ENCODE measurements at regions of chr22 and their contacts with region 1.

Region 1: GRCh38 chr22:35430897-35431322 is 31.0 kb downstream of the MCM5 start:
- DNase-seq: peak; percentile 89 to 95 (median 94)
- H3K4me3 ChIP-seq: no peak overlapping the region
- H3K27ac ChIP-seq: peak overlapping the region in 1 of 2 donors; percentile 33
- H3K4me1 ChIP-seq: no peaks in the 10 kb centered on the region
- H3K27me3 ChIP-seq: no peaks in the 10 kb centered on the region
- CTCF ChIP-seq: peak; percentile 98
- EP300 ChIP-seq: no peak
- POLR2A ChIP-seq: no peak

Region 2: DNA sequence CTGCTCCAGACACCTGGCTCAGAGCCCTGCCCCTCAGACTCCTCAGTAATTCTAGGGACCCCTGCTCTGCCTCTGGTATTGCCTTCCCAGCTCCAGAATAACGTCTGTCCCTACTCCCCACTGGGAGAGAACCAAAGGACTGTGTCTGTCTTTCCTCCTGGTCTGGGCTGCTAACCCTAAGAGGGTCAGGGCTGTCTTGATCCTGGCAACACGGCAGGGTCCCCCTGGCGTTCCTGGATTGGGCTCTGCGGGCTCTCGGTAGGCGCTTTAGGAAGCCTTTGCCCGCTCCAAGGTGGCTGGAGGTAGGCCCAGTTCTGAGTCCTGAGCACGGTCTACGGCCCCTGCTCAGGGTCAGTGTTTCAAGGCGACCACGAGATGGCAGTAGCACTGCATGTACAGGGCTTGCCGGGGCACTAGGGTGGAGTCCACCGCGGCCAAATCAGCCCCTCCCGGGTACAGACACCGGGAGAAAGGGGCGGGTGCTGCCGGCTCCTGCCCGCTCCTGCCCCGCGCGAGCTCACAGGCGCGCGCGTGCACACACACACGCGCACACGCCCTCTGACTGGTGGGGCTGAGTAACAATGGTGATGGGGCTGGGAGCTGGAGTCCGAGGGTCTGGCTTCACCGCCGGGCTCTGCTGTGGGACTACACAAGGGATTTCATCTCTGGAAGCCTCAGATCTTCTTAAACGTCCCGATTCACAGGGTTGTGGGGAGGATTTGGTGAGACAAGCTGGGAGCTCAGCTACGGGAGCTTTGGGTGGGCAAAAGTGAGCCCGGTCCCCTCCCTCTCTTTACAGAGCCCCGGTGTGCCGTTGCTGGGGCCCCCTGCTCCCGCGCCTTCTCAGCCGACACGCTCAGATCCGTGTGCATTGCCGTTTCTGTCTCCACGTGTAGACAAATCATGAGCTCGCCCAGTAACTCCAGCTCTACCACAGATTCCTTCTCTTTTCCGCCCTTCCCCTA is 80.1 kb before region 1 on chr22:
- intact Hi-C with region 1: loop called in 3 of 4 experiments (anchors 5 to 10 kb)
- DNase-seq: peak; percentile 95 to 97 (median 95)
- H3K4me3 ChIP-seq: peak overlapping the region; percentile 42
- H3K27ac ChIP-seq: peak overlapping the region; percentile 53 to 92
- H3K4me1 ChIP-seq: peaks cover 9% of the 10 kb centered on the region
- H3K27me3 ChIP-seq: no peaks in the 10 kb centered on the region
- CTCF ChIP-seq: peak; percentile 96 to 97 (median 96)
- EP300 ChIP-seq: no peak
- POLR2A ChIP-seq: peak; percentile 55

Region 3: DNA sequence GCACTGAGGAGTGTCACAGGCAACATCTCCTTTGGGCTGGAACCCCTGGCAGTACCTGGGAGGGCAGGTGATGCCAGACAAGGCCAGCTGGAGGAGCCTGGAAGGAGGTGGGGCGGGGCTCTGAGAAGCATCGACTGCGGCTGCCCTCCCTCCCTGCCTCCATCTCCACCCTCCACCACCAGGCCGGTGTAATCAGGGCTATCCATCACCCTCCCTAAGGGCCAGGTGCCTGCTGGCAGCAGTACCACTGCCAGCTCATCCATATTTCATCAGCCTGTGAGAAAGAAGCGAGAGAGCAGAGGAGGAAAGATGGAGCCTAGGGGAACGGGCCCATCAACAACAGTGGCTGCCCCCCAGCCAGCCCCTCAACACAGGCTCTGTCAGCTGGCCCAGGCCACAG is 58.3 kb after region 1 on chr22:
- intact Hi-C with region 1: no loop called
- DNase-seq: no peak
- H3K4me3 ChIP-seq: no peak overlapping the region
- H3K27ac ChIP-seq: no peak overlapping the region
- H3K4me1 ChIP-seq: no peaks in the 10 kb centered on the region
- H3K27me3 ChIP-seq: no peaks in the 10 kb centered on the region
- CTCF ChIP-seq: no peak
- EP300 ChIP-seq: no peak
- POLR2A ChIP-seq: no peak

Region 4: GRCh38 chr22:35582861-35583670 is 152.2 kb after region 1 on chr22:
- intact Hi-C with region 1: loop called in 2 of 4 experiments (anchors 2 to 5 kb)
- DNase-seq: peak; percentile 43 to 73 (median 68)
- H3K4me3 ChIP-seq: no peak overlapping the region
- H3K27ac ChIP-seq: no peak overlapping the region
- H3K4me1 ChIP-seq: no peaks in the 10 kb centered on the region
- H3K27me3 ChIP-seq: no peaks in the 10 kb centered on the region
- CTCF ChIP-seq: peak; percentile 83 to 92 (median 88)
- EP300 ChIP-seq: no peak
- POLR2A ChIP-seq: no peak

Region 5: DNA sequence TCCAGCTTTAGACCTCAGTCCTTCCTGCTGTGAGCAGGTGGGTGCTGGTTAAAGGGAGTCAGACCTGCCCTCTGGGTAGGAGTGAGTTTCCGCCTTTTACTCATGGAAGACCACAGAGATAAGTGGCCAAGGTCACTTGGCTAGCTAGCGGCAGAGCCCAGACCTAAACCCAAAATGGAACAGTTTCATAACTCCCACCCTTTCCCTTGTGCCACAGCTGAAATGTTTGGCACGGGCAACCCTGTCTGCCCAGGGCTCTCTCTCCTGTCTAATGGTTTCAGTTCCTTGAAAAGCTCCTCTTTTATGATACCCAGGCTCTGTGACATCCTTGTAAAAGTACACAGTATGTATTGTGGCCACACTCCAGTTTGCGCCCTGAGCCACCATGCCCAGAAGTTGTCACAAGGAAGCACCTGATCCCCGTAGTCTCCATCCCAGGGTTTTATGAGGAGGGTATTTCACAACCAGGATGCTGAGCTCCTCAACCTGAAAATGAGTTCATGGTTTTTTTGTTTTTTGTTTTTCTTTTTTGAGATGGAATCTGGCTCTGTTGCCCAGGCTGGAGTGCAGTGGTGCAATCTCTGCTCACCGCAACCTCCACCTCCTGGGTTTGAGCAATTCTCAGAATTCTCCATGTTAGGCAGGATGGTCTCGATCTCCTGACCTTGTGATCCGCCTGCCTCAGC is 181.1 kb after region 1 on chr22:
- intact Hi-C with region 1: loop called in 1 of 4 experiments (anchors 10 kb)
- DNase-seq: peak in 1 of 5 donors; percentile 10
- H3K4me3 ChIP-seq: no peak overlapping the region
- H3K27ac ChIP-seq: no peak overlapping the region
- H3K4me1 ChIP-seq: peaks cover 6% of the 10 kb centered on the region
- H3K27me3 ChIP-seq: no peaks in the 10 kb centered on the region
- CTCF ChIP-seq: no peak
- EP300 ChIP-seq: no peak
- POLR2A ChIP-seq: no peak

Region 6: DNA sequence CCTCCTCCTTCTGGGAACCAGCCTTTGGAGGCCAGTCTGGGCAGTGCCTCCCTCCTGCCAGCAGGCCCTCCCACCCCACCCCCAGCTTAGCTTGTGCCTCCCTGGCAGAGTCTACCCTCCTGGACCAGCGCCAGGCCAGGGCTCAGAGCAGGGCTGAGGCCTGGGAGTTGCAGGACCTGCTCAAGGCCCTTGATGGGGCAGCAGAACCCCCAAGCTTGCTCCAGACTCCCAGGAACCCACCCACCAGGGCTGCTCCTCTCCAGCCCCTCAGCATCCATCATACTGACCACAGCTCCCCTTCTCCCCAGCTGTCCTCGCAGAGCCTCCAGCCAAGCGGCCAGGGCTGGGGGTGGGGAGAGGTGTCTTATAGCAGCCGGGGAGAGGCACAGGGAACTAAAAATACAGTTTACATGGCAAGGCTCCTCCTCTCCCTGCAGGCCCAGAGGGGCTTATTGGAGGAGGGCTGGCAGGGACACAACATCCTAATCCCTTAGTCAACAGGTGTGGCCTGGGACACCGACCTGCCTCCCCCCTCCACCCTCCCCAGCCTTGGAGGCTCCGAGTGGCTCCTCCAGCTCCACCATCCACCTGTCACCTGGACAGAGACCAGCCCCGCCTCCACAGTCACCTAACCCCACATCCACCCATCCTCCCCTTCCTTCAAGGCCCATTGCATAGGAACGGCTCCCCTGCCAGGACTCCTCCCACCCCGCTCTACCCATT is 191.4 kb after region 1 on chr22:
- intact Hi-C with region 1: loop called in 2 of 4 experiments (anchors 2 to 10 kb)
- DNase-seq: peak in 1 of 5 donors; percentile 46
- H3K4me3 ChIP-seq: no peak overlapping the region
- H3K27ac ChIP-seq: no peak overlapping the region
- H3K4me1 ChIP-seq: peaks cover 1% of the 10 kb centered on the region
- H3K27me3 ChIP-seq: no peaks in the 10 kb centered on the region
- CTCF ChIP-seq: no peak
- EP300 ChIP-seq: no peak
- POLR2A ChIP-seq: no peak

Region 7: DNA sequence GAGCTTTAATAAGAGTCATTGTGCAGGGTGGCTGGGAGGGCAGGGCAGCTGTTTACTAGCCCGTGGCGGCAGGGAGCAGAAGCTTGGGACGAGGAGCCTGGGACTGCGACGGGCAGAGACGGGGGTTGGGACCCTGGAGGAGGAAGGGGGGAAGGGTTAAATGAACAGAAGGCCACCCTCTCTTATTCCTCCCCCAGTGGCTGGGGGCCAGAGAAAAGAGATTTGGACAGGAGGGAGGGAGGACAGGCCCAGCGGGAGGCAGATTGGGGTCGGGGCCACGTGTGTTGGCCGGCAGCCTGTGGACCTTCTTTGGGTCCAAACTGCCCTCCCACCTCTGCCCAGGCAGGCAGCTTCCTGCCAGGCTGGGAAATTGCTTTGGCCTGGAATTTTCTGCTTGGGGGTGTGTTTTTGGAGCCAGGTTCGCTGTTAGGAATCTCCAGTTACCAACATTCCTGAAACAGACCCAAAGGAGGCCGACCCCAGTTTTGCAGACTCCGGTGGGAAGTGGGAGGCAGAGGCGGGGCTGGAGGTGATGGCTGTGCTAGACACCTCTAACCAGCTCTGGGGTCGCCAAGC is 679.5 kb after region 1 on chr22:
- intact Hi-C with region 1: loop called in 1 of 4 experiments (anchors 10 kb)
- DNase-seq: peak in 4 of 5 donors; percentile 32 to 75 (median 38)
- H3K4me3 ChIP-seq: no peak overlapping the region
- H3K27ac ChIP-seq: no peak overlapping the region
- H3K4me1 ChIP-seq: peaks cover 6% of the 10 kb centered on the region
- H3K27me3 ChIP-seq: no peaks in the 10 kb centered on the region
- CTCF ChIP-seq: no peak
- EP300 ChIP-seq: no peak
- POLR2A ChIP-seq: no peak

Region 8: GRCh38 chr22:36123673-36124630 is 693.0 kb after region 1 on chr22:
- intact Hi-C with region 1: loop called in 2 of 4 experiments (anchors 10 kb)
- DNase-seq: peak; percentile 94 to 97 (median 95)
- H3K4me3 ChIP-seq: peak overlapping the region; percentile 33
- H3K27ac ChIP-seq: peak overlapping the region; percentile 33 to 79
- H3K4me1 ChIP-seq: no peaks in the 10 kb centered on the region
- H3K27me3 ChIP-seq: no peaks in the 10 kb centered on the region
- CTCF ChIP-seq: peak; percentile 94 to 99 (median 98)
- EP300 ChIP-seq: peak; percentile 55
- POLR2A ChIP-seq: peak; percentile 5